ENCODE measurements at regions of chr2 and their contacts with region 1.

Region 1: DNA sequence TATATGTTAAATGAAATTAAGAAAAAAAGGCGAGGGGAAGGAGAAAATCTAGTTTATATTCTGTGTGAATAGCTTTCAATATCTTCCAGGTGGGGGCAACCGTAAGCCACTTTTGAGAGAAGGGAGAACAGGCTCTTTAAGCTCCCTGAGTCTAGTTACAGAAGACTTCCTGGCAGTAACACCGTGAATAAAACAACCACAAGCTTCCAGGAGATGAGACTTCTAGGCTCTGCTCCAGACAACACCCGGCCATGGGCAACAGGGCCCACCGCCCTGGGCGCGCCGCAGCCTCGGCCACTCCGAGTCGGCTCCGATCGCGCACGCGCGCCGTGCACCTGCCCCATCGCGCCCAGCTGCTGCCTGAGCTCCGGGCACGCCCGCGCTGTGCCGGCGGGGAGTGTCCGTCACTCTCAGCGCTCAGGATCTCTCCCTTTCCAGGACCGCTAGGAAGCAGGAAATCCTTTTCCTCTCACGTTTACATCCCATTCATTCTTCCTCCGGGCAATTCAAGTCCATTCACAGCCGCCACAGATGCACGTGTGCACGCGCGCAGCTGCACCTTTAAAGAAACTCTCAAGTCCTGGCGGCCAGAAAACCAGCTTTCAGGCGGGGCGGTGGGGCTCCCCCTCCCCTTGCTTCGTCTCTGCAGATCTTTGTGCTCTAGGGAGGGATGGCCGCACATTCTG is 19.4 kb upstream of the PAX3 start:
- DNase-seq: peak in 1 of 9 donors; percentile 64
- ATAC-seq: peak; percentile 59
- H3K4me3 ChIP-seq: peak overlapping the region; percentile 49
- H3K4me3 Mint-ChIP-seq: peak overlapping the region; percentile 34 to 93 (median 76)
- H3K27ac ChIP-seq: no peak overlapping the region
- H3K27ac Mint-ChIP-seq: peak overlapping the region in 1 of 9 donors; percentile 36
- H3K4me1 ChIP-seq: no peaks in the 10 kb centered on the region
- H3K4me1 Mint-ChIP-seq: peaks cover 5 to 21% (median 14%) of the 10 kb centered on the region in 7 donors
- H3K27me3 ChIP-seq: peaks cover 0 to 5% of the 10 kb centered on the region in 2 donors
- H3K27me3 Mint-ChIP-seq: peaks cover 66 to 76% (median 73%) of the 10 kb centered on the region in 5 donors

Region 2: DNA sequence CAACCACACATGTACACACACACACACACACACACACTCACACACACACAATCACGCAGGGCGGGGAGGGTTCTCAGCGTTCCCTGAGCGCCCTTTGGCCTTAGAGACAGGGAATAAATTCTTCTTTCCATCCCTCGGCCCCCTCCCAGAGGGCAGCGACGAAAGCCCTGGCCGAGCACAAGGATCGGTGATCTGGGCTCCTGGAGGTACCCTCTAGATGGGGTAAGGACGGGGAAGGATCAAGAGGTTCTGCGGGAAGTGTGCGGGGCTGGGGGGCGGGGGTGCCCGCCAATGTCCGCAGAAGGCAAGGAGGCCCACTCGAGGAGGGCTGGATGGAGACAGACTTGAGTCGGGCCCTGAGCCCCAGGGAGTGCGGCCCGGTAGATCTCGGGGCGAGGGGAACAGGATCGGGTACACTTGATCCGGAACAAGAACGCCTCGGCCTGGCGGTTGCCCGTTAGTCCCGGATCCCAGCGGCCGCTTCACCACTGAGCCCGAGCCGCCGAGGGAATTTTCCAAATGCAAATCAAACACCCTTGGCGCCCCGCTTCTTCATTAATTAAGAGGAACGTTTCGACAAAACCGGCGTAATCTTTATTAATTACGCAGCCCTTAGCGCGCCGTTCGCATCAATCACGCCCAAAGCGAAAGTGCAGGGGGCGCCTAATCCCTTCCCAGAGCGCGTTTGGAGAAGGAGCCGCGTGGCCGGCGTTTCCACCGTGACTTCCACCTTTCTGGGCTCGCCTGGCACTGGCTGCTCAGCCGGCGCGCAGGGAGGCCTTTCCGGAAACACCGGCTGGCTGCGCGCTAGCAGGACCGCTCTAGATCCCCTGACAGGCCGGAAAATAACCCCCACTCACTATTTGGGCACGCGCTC is 12.4 kb before region 1 on chr2:
- CTCF ChIA-PET with region 1: interaction called, 3 read pairs
- POLR2A ChIA-PET with region 1: no interaction called
- intact Hi-C with region 1: loop called in 1 of 2 experiments (anchors 1 kb)
- DNase-seq: no peak
- ATAC-seq: no peak
- H3K4me3 ChIP-seq: peak overlapping the region; percentile 43
- H3K4me3 Mint-ChIP-seq: peak overlapping the region; percentile 50 to 88 (median 78)
- H3K27ac ChIP-seq: no peak overlapping the region
- H3K27ac Mint-ChIP-seq: peak overlapping the region in 1 of 9 donors; percentile 85
- H3K4me1 ChIP-seq: peaks cover 0 to 12% of the 10 kb centered on the region in 2 donors
- H3K4me1 Mint-ChIP-seq: peaks cover 30 to 46% (median 37%) of the 10 kb centered on the region in 7 donors
- H3K27me3 ChIP-seq: peaks cover 11 to 35% of the 10 kb centered on the region in 2 donors
- H3K27me3 Mint-ChIP-seq: peaks cover 90 to 99% (median 92%) of the 10 kb centered on the region in 5 donors

Region 3: GRCh38 chr2:222483513-222484039 is 165.4 kb after region 1 on chr2:
- CTCF ChIA-PET with region 1: no interaction called
- POLR2A ChIA-PET with region 1: no interaction called
- intact Hi-C with region 1: loop called in 1 of 2 experiments (anchors 5 kb)
- DNase-seq: no peak
- ATAC-seq: no peak
- H3K4me3 ChIP-seq: no peak overlapping the region
- H3K4me3 Mint-ChIP-seq: no peak overlapping the region
- H3K27ac ChIP-seq: no peak overlapping the region
- H3K27ac Mint-ChIP-seq: no peak overlapping the region
- H3K4me1 ChIP-seq: no peaks in the 10 kb centered on the region
- H3K4me1 Mint-ChIP-seq: peaks cover 0 to 3% (median 0%) of the 10 kb centered on the region in 7 donors
- H3K27me3 ChIP-seq: no peaks in the 10 kb centered on the region
- H3K27me3 Mint-ChIP-seq: peaks cover 3 to 58% (median 12%) of the 10 kb centered on the region in 5 donors

Region 4: DNA sequence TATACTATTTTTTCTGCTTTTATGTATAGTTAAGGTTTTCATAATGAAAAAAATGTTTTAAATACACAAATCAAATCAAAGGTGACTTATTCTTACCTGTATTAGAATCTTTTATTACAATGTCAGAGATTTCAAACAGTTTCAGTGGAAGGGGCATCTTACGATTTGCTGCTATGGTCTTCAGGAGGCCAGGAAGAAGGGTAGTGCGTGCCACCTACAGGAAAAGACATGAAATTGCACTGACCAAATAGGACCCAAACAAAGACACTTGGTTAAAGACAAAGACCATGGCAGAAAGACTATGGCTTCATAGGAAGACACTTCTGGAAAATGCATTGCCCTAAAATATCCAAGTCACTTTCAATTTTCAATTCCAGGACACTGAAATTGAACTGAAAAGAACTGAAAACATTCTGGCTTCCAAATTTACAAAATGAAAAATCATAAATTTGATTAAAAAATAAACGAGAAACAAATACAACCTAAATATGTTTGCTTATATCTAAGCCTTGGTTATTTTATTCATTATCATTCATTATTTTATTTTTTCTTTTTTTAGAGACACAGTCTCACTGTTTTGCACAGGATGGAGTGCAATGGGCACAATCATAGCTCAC is 295.7 kb after region 1 on chr2:
- CTCF ChIA-PET with region 1: no interaction called
- POLR2A ChIA-PET with region 1: no interaction called
- intact Hi-C with region 1: loop called (anchors 1 kb)
- DNase-seq: peak in 3 of 9 donors; percentile 2 to 11 (median 2)
- ATAC-seq: no peak
- H3K4me3 ChIP-seq: no peak overlapping the region
- H3K4me3 Mint-ChIP-seq: no peak overlapping the region
- H3K27ac ChIP-seq: no peak overlapping the region
- H3K27ac Mint-ChIP-seq: peak overlapping the region in 1 of 9 donors; percentile 46
- H3K4me1 ChIP-seq: no peaks in the 10 kb centered on the region
- H3K4me1 Mint-ChIP-seq: peaks cover 0 to 6% (median 0%) of the 10 kb centered on the region in 7 donors
- H3K27me3 ChIP-seq: no peaks in the 10 kb centered on the region
- H3K27me3 Mint-ChIP-seq: no peaks in the 10 kb centered on the region

Region 5: DNA sequence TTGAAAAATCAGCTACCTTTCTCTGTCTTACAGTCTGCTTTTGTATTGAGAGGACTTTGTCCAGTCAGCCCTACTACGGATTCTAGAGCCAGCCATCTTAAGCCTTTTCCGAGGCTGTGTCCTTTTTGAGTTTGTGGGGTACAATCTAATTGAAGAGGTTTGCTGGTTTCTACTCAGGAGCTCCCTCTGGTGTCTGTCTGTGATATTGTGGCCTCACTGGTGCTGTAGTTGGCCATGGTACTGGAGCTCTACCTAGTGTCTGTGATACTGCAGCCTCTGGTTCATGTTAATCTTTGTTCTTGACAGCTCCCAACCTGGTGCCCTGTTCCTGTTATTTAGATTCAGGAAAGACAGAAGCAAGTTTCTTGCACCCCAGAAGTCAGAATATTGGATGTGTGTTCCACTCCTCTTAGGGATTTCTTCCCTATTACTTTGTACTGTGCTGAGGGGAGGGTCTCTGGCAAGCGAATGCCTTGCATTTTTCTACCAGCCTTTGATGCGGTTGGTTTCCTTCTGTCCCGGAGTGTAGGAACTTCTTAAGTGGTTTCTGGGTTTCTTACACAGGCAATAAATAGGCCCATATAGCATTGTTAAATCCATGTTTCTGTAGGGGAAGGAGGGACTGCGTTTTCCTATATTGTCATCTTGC is 621.2 kb after region 1 on chr2:
- CTCF ChIA-PET with region 1: no interaction called
- POLR2A ChIA-PET with region 1: no interaction called
- intact Hi-C with region 1: loop called in 1 of 2 experiments (anchors 5 kb)
- DNase-seq: peak; percentile 8 to 58 (median 33)
- ATAC-seq: peak; percentile 89
- H3K4me3 ChIP-seq: no peak overlapping the region
- H3K4me3 Mint-ChIP-seq: no peak overlapping the region
- H3K27ac ChIP-seq: no peak overlapping the region
- H3K27ac Mint-ChIP-seq: no peak overlapping the region
- H3K4me1 ChIP-seq: no peaks in the 10 kb centered on the region
- H3K4me1 Mint-ChIP-seq: peaks cover 0 to 6% (median 0%) of the 10 kb centered on the region in 7 donors
- H3K27me3 ChIP-seq: no peaks in the 10 kb centered on the region
- H3K27me3 Mint-ChIP-seq: no peaks in the 10 kb centered on the region

Region 6: GRCh38 chr2:223235986-223236385 is 917.8 kb after region 1 on chr2:
- CTCF ChIA-PET with region 1: no interaction called
- POLR2A ChIA-PET with region 1: no interaction called
- intact Hi-C with region 1: no loop called
- DNase-seq: no peak
- ATAC-seq: no peak
- H3K4me3 ChIP-seq: no peak overlapping the region
- H3K4me3 Mint-ChIP-seq: no peak overlapping the region
- H3K27ac ChIP-seq: no peak overlapping the region
- H3K27ac Mint-ChIP-seq: no peak overlapping the region
- H3K4me1 ChIP-seq: no peaks in the 10 kb centered on the region
- H3K4me1 Mint-ChIP-seq: no peaks in the 10 kb centered on the region
- H3K27me3 ChIP-seq: no peaks in the 10 kb centered on the region
- H3K27me3 Mint-ChIP-seq: peaks cover 0 to 5% (median 0%) of the 10 kb centered on the region in 5 donors

Measured in naive thymus-derived CD4-positive, alpha-beta T cell (primary cell).